ENCODE measurements at regions of chr17 and their contacts with region 1.

Region 1: GRCh38 chr17:76452660-76453430 is at the start of gene UBE2O:
- DNase-seq: peak; percentile 97
- H3K4me3 ChIP-seq: peak within 1 kb of the TSS; percentile 73 to 95 (median 91)
- H3K27ac ChIP-seq: peak within 1 kb of the TSS in 7 of 8 donors; percentile 66 to 90 (median 81)
- H3K4me1 ChIP-seq: peaks cover 7 to 48% (median 27%) of the 10 kb centered on the region in 6 donors
- H3K27me3 ChIP-seq: no peaks in the 10 kb centered on the region
- CTCF ChIP-seq: peak in 7 of 11 experiments; percentile 29 to 64 (median 46)
- POLR2A ChIP-seq: no peak
- total RNA-seq, gene UBE2O: 24.1 to 55.9 (median 32.5) TPM

Region 2: GRCh38 chr17:76032073-76032779 is 420.6 kb before region 1 on chr17:
- intact Hi-C with region 1: no loop called
- DNase-seq: no peak
- H3K4me3 ChIP-seq: no peak overlapping the region
- H3K27ac ChIP-seq: no peak overlapping the region
- H3K4me1 ChIP-seq: peaks cover 12 to 25% (median 17%) of the 10 kb centered on the region in 6 donors
- H3K27me3 ChIP-seq: peaks cover 0 to 13% (median 0%) of the 10 kb centered on the region in 7 donors
- CTCF ChIP-seq: no peak
- POLR2A ChIP-seq: no peak

Region 3: DNA sequence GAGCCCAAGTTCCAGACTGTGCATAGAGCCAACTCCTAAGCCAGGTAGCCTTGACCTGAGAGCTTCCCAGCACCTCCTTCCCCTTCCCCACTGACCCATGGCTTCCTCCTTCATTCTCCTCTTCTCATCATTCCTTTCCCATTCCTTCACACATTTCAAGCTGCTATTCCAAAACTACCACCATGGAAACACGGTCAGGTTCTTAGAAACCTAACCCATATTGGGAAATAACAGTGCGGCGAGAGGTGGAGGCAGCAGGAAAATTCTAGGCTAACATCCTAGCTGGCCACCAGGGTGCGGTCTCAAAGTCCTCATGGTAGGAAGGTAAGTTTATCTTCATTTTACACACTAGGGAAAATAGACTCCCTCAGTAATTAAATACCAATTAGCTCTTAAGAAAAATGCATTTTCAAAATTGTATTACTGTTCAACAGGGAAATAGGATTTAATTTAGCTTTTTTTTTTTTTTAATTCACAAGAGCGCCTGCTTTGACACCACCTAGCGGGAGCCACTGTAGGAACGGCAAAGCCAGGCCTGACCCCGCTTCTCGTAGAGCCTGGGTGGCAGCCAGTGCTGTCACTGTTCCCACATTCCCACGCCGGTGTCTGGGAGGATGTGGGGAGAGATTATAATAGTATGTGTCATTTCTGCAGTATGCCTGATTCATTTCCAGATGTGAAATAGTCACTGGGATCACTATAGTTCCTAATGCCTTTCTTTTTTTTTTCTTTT is 82.4 kb before region 1 on chr17:
- intact Hi-C with region 1: no loop called
- DNase-seq: no peak
- H3K4me3 ChIP-seq: no peak overlapping the region
- H3K27ac ChIP-seq: no peak overlapping the region
- H3K4me1 ChIP-seq: no peaks in the 10 kb centered on the region
- H3K27me3 ChIP-seq: peaks cover 0 to 4% (median 0%) of the 10 kb centered on the region in 7 donors
- CTCF ChIP-seq: peak in 3 of 11 experiments; percentile 12 to 28 (median 13)
- POLR2A ChIP-seq: no peak

Region 4: DNA sequence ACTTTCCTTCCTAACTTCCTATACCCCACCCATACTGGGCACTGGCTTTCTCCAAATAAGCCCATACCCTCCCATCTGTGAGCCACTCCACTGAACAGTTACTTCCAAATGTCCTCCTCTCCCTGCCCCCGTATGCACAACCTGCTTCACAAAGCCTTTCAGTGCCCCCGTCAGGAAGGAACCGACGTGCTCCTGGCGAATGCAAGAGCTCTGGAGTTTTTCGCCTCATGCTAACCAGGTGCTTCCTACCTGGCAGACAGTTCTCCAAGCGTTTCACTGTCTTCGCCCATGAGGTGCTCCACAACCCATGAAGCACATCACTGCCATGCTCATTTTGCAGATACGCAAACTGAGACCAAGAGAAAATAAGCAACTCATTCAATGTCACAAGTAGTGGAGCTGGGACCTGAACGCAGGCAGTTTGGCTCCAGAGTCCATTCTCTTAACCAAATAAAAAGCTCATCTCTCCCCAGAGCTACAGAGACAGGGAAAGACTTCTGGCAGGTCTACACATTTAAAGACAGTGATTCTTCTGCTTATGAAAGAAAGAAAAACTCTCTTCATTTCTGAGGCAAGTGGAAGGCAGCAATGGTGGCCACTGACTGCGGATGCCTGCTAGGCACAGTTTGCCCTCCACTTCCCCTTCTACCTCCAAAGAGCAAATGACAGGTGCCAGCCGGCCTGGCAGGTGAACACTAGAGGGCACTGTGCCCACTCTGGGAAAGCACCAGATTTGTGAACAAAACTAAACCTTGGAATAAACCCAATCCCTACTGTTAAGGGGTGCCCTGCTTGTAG is 44.6 kb before region 1 on chr17:
- intact Hi-C with region 1: loop called (anchors 10 kb)
- DNase-seq: peak; percentile 93
- H3K4me3 ChIP-seq: no peak overlapping the region
- H3K27ac ChIP-seq: no peak overlapping the region
- H3K4me1 ChIP-seq: peaks cover 12 to 45% (median 39%) of the 10 kb centered on the region in 6 donors
- H3K27me3 ChIP-seq: no peaks in the 10 kb centered on the region
- CTCF ChIP-seq: peak; percentile 59 to 95 (median 82)
- POLR2A ChIP-seq: no peak

Measured in spleen (tissue), 13 donors.